Activated T-helper 1 cell treated with anti-CD3 and anti-CD28 coated beads, Interleukin-12 subunit alpha, Interleukin-12 subunit beta, Interleukin-2, Interleukin-4 antibody, amounts not matched to agents 30 ng/mL and 10 ng/mL and 1 ng/mL, durations not matched to agents 14 hours and 24 hours and 36 hours (primary cell): ENCODE measurements at regions of chr10 and their contacts with region 1.

Region 1: GRCh38 chr10:120942806-120943413 is 91.7 kb downstream of the WDR11 start:
- DNase-seq: peak; percentile 65
- H3K4me3 Mint-ChIP-seq: no peak overlapping the region
- H3K27ac Mint-ChIP-seq: no peak overlapping the region
- H3K4me1 Mint-ChIP-seq: peaks cover 13% of the 10 kb centered on the region
- H3K27me3 Mint-ChIP-seq: peaks cover 6% of the 10 kb centered on the region

Region 2: DNA sequence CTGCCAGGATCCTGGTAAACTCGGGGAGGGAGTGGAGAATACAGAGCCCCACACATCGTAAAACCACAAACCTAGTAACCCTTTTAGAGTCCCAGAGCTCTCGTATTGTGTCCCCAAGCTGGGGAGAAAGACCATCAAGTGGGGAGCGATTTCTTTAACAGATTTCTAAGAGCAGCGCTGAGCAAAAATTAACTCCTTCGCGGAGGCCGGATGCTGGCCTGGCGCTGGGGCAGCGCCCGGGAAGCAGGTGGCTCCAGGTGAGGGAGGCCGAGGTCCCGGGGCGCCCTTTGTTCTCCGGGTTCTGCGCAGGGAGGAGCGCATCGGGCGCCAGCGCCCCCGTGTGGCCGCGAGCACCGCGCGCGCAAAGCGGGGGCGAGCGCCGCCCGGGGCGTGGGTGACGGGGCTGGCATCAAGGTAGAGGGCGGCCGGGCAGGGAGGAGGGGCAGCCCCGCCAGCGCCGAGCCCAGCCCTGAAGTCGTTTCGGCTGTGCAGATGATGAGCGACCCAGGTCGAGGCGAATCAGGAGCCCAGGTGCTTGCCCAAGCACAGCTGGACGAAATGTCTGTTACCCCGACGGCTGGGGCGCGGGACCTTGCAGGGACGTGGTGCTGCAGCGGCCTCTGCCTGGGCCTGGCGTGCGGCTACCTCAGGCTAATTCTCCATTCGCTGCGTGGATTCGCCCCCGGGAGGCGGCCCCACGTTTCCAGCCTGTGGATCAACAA is 665.7 kb after region 1 on chr10:
- intact Hi-C with region 1: loop called (anchors 2 kb)
- DNase-seq: no peak
- H3K4me3 Mint-ChIP-seq: no peak overlapping the region
- H3K27ac Mint-ChIP-seq: no peak overlapping the region
- H3K4me1 Mint-ChIP-seq: no peaks in the 10 kb centered on the region
- H3K27me3 Mint-ChIP-seq: peaks cover 2% of the 10 kb centered on the region

Region 3: GRCh38 chr10:121734589-121735045 is 791.7 kb after region 1 on chr10:
- intact Hi-C with region 1: loop called (anchors 1 kb)
- DNase-seq: no peak
- H3K4me3 Mint-ChIP-seq: no peak overlapping the region
- H3K27ac Mint-ChIP-seq: no peak overlapping the region
- H3K4me1 Mint-ChIP-seq: no peaks in the 10 kb centered on the region
- H3K27me3 Mint-ChIP-seq: peaks cover 17% of the 10 kb centered on the region

Region 4: DNA sequence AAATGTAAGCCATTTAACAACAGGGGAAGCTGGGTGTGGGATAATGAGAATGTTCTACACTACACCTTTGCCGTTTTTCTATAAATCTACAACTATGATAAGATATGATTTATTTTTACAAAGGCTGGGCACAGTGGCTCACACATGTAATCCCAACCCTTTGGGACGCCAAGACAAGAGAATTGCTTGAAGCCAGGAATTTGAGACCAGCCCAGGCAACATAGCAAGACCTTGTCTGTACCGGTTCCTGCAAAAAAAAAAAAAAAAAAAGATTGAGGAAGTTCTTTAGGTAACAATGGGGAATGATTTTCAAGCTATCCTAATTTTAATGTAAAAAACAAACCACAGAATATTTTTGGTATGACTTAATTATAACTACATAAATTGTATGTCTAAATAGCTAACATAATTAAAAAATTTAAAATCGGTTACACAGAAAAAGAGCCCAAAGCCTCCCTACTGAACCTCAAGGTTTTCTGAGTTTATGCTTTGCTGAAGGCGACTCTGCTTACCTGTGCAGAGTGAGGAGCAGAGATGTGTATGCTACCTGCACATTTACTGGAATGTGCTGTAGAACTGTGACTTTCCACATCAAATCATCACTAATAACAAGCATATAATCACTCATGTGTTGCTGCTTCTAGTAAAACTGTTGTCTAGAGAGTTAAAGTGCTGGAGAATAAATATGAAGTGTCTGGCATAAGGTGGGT is 821.5 kb after region 1 on chr10:
- intact Hi-C with region 1: no loop called
- DNase-seq: no peak
- H3K4me3 Mint-ChIP-seq: no peak overlapping the region
- H3K27ac Mint-ChIP-seq: no peak overlapping the region
- H3K4me1 Mint-ChIP-seq: no peaks in the 10 kb centered on the region
- H3K27me3 Mint-ChIP-seq: no peaks in the 10 kb centered on the region

Region 5: DNA sequence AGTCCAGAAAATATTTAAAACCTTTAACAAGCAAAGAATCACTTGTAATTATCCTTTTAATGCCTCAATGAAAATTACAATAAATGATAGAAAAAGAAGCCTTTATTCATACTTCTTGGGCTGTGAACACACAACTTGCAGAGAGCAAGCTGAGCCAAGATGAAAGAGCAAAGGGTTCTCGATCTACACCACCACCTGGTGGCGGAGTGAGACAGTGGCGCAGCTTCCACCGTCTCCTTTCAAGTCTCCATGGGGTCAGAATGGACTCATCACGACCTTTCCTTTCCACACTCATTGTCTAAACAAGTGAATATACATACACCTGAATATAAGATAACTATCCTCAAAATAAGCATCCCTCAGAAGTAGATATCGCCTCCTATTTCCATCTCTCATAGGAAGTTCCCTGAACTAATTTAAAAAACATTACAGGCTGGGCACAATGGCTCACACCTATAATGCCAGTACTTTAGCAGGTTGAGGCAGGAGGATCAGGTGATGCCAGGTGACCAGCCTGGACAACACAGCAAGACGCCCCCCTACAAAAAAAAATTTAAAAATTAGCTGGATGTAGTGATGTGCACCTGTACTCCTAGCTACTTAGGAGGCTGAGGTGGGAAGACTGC is 944.2 kb after region 1 on chr10:
- intact Hi-C with region 1: loop called (anchors 1 kb)
- DNase-seq: peak; percentile 3
- H3K4me3 Mint-ChIP-seq: no peak overlapping the region
- H3K27ac Mint-ChIP-seq: no peak overlapping the region
- H3K4me1 Mint-ChIP-seq: no peaks in the 10 kb centered on the region
- H3K27me3 Mint-ChIP-seq: no peaks in the 10 kb centered on the region

Region 6: DNA sequence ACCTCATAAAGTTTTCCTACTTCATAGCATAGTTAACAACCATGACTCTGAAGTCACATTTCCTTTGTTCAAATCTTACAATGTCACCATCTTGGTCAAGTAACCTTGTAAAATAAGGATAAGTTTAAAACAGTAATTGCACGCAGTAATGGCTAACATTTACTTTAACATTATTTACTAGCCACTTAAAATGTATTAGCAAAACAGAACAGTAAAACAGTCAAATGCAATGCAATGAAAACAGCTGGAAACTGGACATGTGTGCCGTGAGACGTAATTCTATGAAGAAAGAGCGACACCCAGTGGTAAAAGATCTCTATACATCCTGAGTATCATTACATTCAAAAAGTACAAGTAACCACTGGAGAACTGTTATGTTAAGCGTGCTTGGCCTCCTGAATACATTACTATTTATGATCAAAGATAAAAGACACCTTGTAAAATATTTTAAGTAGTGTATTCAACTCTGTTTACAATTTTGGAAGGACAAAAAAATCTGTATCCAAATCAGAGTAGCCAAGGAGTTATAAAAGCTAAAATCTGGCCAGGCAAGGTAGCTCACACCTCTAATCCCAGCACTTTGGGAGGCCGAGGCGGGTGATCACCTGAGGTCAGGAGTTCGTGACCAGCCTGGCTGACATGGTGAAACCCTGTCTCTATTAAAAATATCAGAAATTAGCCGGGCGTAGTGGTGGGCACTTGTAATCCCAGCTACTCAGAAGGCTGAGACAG is 957.7 kb after region 1 on chr10:
- intact Hi-C with region 1: loop called (anchors 1 kb)
- DNase-seq: no peak
- H3K4me3 Mint-ChIP-seq: no peak overlapping the region
- H3K27ac Mint-ChIP-seq: no peak overlapping the region
- H3K4me1 Mint-ChIP-seq: peaks cover 5% of the 10 kb centered on the region
- H3K27me3 Mint-ChIP-seq: no peaks in the 10 kb centered on the region